CD4-positive, alpha-beta T cell (primary cell): ENCODE measurements at regions of chr3 and their contacts with region 1.

Region 1: DNA sequence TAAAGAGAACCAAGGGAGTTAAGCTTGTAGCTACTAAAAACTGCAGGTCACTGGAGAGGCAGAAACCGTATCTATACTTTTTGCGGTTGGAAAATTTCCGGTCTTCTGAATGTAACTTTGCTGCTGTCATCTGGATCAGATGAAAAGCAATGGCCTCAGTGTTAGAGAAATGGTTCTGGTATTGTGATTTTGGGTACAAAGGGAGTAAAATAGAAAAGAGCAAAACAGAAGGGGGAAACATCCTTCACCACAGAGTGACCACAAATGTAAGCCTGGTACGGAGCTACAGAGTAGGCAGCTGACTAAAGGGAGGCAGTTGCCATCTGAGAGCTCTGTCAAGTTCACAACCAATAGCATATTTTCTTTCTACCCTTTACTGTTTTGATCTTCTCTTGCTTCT is 5.6 kb downstream of the CD96 start:
- DNase-seq: peak in 12 of 14 experiments; percentile 12 to 82 (median 35)
- ATAC-seq: peak; percentile 82
- H3K4me3 ChIP-seq: peak overlapping the region; percentile 40
- H3K4me3 Mint-ChIP-seq: no peak overlapping the region
- H3K27ac ChIP-seq: peak overlapping the region; percentile 69 to 81
- H3K27ac Mint-ChIP-seq: no peak overlapping the region
- H3K4me1 ChIP-seq: peaks cover 54% of the 10 kb centered on the region
- H3K4me1 Mint-ChIP-seq: no peaks in the 10 kb centered on the region
- H3K27me3 ChIP-seq: no peaks in the 10 kb centered on the region
- H3K27me3 Mint-ChIP-seq: no peaks in the 10 kb centered on the region
- CTCF ChIP-seq: no peak

Region 2: GRCh38 chr3:111604119-111604518 is 56.5 kb after region 1 on chr3:
- CTCF ChIA-PET with region 1: interaction called, 3 read pairs
- POLR2A ChIA-PET with region 1: interaction called, 3 read pairs
- intact Hi-C with region 1: loop called in 1 of 2 experiments (anchors 5 kb)
- DNase-seq: no peak
- ATAC-seq: no peak
- H3K4me3 ChIP-seq: no peak overlapping the region
- H3K4me3 Mint-ChIP-seq: no peak overlapping the region
- H3K27ac ChIP-seq: no peak overlapping the region
- H3K27ac Mint-ChIP-seq: peak overlapping the region; percentile 21
- H3K4me1 ChIP-seq: peaks cover 7% of the 10 kb centered on the region
- H3K4me1 Mint-ChIP-seq: peaks cover 56% of the 10 kb centered on the region
- H3K27me3 ChIP-seq: no peaks in the 10 kb centered on the region
- H3K27me3 Mint-ChIP-seq: no peaks in the 10 kb centered on the region
- CTCF ChIP-seq: no peak